ENCODE measurements at regions of chr1 and their contacts with region 1.

Region 1: DNA sequence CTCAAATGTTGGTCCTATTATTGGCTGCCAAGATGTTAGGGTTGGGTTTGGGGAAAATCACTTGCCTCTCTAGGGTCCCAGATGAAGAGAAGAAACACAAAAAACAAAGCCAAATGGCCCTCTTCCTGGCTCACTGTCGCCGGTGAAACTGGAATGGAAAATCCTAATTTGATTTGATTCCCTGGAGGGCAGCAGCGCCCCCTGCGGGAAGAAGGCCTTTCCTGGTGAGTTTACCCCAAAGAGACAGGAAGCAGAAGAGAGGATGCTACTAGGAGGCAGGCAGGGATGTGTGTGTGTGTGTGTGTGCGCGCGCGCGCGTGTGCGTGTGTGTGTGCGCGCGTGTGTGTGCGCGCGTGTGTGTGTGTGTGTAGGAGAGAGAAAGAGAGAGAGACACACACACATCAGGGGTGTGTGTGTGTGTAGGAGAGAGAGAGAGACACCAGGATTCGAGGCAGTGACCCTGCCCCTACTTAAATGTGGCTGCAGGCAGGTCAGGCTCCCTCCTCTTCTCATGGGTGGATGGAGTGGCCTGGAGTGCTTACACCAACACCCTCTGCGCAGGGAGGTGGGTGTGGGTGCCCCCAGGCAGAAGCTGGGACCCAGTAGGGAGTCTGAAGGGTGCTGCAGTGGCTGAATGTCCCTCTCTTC is 3.1 kb upstream of the SELENON start:
- DNase-seq: peak; percentile 71
- H3K4me3 ChIP-seq: peak overlapping the region in 1 of 2 experiments; percentile 26; a peak in 1 of 4 replicates
- H3K27ac ChIP-seq: no peak overlapping the region
- H3K4me1 ChIP-seq: peaks cover 0 to 27% of the 10 kb centered on the region in 2 experiments; a peak in 2 of 4 replicates
- H3K27me3 ChIP-seq: no peaks in the 10 kb centered on the region
- CTCF ChIP-seq: peak; percentile 78
- EP300 ChIP-seq: no peak
- RAD21 ChIP-seq: peak; percentile 74

Region 2: GRCh38 chr1:25810341-25811299 is 13.7 kb after region 1 on chr1:
- CTCF ChIA-PET with region 1: interaction called, 19 read pairs
- POLR2A ChIA-PET with region 1: interaction called, 4 read pairs
- DNase-seq: peak; percentile 90
- H3K4me3 ChIP-seq: no peak overlapping the region; a peak in 1 of 4 replicates
- H3K27ac ChIP-seq: peak overlapping the region in 1 of 2 experiments; percentile 24; a peak in 1 of 4 replicates
- H3K4me1 ChIP-seq: peaks cover 0 to 16% of the 10 kb centered on the region in 2 experiments; a peak in 1 of 4 replicates
- H3K27me3 ChIP-seq: no peaks in the 10 kb centered on the region
- CTCF ChIP-seq: peak; percentile 90
- EP300 ChIP-seq: no peak
- RAD21 ChIP-seq: peak; percentile 91